ENCODE measurements at regions of chr6 and their contacts with region 1.

Region 1: DNA sequence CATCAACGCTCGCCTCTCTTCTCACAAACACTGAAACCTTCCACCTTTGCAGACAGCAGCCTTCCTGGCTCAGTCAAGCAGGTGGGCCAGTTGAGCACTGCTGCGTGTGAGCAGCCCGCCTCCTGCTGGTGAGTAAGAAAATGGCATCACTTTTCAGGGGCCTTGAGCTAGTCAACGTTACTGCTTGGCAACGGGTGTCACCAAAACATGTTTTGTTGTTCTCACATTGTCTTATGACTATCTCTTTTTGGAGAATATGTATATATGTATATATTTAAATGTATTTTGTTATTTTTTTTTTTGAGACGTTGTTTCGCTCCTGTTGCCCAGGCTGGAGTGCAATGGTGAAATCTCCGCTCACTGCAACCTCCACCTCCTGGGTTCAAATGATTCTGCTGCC is 97.0 kb upstream of the AGPAT4 start:
- DNase-seq: peak in 2 of 3 donors; percentile 67 to 73
- ATAC-seq: peak; percentile 54 to 57
- H3K4me3 ChIP-seq: no peak overlapping the region
- H3K27ac ChIP-seq: no peak overlapping the region
- H3K4me1 ChIP-seq: no peaks in the 10 kb centered on the region
- H3K27me3 ChIP-seq: no peaks in the 10 kb centered on the region

Region 2: GRCh38 chr6:160733050-160733646 is 637.7 kb before region 1 on chr6:
- intact Hi-C with region 1: loop called in 2 of 4 experiments (anchors 5 to 10 kb)
- DNase-seq: peak in 2 of 3 donors; percentile 17 to 60
- ATAC-seq: peak; percentile 33 to 55
- H3K4me3 ChIP-seq: no peak overlapping the region
- H3K27ac ChIP-seq: no peak overlapping the region
- H3K4me1 ChIP-seq: no peaks in the 10 kb centered on the region
- H3K27me3 ChIP-seq: no peaks in the 10 kb centered on the region

Region 3: GRCh38 chr6:160930547-160931377 is 440.1 kb before region 1 on chr6:
- intact Hi-C with region 1: loop called in 3 of 4 experiments (anchors 5 kb)
- DNase-seq: peak; percentile 74 to 93 (median 90)
- ATAC-seq: peak; percentile 94
- H3K4me3 ChIP-seq: peak overlapping the region; percentile 51
- H3K27ac ChIP-seq: no peak overlapping the region
- H3K4me1 ChIP-seq: no peaks in the 10 kb centered on the region
- H3K27me3 ChIP-seq: no peaks in the 10 kb centered on the region

Region 4: DNA sequence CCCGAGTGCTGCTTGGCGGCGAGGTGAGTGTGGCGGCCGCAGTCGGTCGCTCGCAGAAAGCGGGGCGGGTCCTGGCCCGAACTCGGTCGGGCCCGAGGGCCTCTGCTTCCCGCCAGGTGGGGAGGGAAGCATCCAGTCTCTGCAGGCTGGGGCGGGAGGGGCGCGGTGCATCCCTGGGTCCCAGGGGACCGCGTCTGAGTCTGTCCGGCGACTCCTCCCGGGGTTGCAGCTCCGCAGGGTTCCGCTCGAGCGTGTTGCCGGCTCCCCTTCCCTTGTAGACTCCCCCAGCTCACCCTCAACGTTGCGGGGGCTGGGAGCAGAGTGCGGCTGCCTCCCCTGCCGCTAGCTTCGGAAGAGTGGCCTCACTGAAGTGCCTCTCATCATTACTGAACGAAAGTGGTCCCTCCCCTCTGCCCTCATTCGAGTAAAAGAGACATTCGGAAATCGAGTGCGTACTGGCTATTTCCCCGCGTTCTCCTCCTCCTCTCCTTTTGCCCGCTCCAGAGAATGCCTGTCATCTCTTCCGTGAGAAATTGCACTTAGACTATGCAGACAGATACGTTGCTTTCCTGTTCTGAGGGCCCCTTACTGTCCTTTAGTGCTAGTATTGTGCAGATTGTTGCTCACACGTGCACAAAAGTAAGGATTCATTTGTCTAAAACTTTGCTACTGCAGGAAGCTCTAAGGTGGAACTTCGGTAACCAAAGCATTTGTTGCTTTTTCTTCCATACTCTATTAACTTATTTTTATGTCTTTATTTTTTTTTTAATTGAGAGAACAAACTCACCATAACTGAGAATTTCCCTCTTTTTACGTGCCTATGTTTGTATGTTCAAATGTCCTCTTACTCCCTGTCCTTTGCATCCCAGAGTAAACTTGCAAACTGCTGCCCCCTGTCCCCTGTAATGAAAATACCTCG is 378.6 kb before region 1 on chr6:
- intact Hi-C with region 1: loop called in 1 of 4 experiments (anchors 10 kb)
- DNase-seq: peak; percentile 53 to 81 (median 72)
- ATAC-seq: peak; percentile 65 to 74
- H3K4me3 ChIP-seq: peak overlapping the region; percentile 52
- H3K27ac ChIP-seq: peak overlapping the region; percentile 96
- H3K4me1 ChIP-seq: peaks cover 7% of the 10 kb centered on the region
- H3K27me3 ChIP-seq: no peaks in the 10 kb centered on the region

Region 5: DNA sequence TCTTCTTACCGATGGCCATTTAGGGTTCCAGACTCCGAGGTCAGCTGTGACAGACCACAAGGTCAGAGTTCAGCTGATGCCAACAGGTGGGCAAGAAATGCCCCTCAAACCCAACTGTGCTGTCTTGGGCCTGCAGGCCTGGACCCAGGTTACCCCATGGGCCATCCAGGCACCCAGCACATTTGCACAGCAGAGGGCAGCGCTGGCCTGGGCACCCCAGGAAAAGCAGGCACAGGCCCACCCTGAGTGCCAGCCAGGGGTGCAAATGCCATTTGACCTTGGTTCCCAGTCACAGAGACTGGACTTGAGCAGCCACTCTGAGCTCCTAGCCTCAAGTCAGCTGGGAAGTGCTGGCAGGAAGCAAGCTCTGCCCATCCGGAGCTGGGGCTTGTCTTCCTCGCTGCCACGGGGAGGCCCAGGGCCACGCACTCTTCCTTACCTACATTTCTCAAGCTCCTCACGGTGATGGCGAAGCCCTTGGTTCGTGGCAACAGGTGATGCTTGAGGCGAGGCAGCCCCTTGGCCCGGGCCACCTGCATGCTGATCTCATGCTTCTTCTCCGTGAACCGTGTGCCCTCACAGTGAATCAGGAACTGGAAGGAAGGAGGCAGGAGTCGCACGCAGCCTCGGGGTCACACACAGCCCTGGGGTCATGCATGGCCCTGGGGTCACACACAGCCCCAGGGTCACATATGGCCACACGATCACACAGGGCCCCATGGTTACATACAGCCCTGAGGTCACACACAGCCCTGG is 217.8 kb before region 1 on chr6:
- intact Hi-C with region 1: loop called in 2 of 4 experiments (anchors 5 kb)
- DNase-seq: no peak
- ATAC-seq: peak in 1 of 2 donors; percentile 58
- H3K4me3 ChIP-seq: no peak overlapping the region
- H3K27ac ChIP-seq: no peak overlapping the region
- H3K4me1 ChIP-seq: no peaks in the 10 kb centered on the region
- H3K27me3 ChIP-seq: no peaks in the 10 kb centered on the region

Region 6: DNA sequence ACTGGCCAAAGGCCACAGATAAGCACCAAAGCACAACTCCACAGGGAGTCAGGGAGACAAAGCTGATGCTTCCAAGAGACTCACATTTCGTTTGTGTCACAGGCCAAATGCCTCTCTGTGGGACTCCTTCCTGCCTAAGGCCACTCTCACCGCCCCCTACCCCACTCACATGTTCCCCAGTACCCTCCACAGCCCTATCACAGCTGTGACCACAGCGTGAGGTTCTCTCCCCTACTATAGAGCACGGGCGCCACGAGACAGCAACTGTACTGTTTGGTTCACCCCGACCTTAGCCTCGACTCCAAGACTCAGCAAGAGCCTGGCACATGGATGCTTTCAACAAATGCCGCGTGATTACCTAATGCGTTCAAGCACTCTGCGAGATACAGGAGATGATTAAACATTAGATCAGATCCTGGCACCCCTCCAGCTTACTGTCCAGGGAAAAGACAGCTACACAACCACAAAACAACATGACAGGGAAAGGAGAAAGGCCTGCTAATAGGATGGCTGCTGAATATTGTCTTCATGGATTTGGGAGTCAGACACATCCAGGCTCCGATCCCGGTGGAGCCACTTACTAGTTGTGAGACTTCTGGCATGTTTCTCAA is 202.5 kb before region 1 on chr6:
- intact Hi-C with region 1: loop called in 1 of 4 experiments (anchors 10 kb)
- DNase-seq: no peak
- ATAC-seq: peak in 1 of 2 donors; percentile 51
- H3K4me3 ChIP-seq: no peak overlapping the region
- H3K27ac ChIP-seq: no peak overlapping the region
- H3K4me1 ChIP-seq: no peaks in the 10 kb centered on the region
- H3K27me3 ChIP-seq: no peaks in the 10 kb centered on the region

Region 7: GRCh38 chr6:161257793-161258457 is 113.0 kb before region 1 on chr6:
- intact Hi-C with region 1: no loop called
- DNase-seq: no peak
- ATAC-seq: peak; percentile 57 to 90
- H3K4me3 ChIP-seq: no peak overlapping the region
- H3K27ac ChIP-seq: no peak overlapping the region
- H3K4me1 ChIP-seq: peaks cover 2% of the 10 kb centered on the region
- H3K27me3 ChIP-seq: no peaks in the 10 kb centered on the region

Region 8: DNA sequence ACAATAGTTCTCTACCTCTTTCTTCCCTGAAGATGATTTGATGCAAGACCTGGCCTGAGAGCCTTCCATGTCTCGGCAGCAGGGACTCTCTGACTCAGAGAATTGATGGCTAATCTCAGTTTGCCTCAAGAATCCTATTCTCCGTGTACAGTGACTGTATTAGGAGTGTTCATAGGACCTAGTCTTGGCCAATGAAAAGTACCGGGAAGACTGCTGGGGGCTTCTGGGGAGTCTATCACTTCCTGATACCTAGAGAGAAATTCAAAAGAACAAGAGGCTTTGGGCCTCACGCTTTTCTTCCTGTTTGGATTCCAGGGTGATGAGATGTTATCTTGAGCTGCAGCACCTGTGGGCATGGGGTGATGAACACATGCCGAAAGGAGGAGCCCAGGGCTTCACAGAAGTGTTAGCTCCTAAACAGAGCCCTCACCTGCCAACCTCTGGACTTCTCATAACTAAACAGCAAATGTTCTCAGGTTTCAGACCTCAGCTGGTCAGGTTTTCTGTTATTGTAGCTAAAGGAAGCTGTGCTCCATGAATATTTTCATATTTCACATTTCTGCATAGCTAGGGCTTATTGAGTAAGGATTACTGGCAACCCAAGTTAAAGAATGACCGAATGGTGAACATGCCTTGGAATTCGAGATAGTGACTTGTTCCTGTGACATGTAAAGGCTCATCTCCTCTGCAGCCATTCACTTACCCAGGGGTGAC is 226.1 kb after region 1 on chr6:
- intact Hi-C with region 1: no loop called
- DNase-seq: no peak
- ATAC-seq: no peak
- H3K4me3 ChIP-seq: no peak overlapping the region
- H3K27ac ChIP-seq: no peak overlapping the region
- H3K4me1 ChIP-seq: no peaks in the 10 kb centered on the region
- H3K27me3 ChIP-seq: no peaks in the 10 kb centered on the region